H1 (cell line): ENCODE measurements at regions of chr21 and their contacts with region 1.

Region 1: DNA sequence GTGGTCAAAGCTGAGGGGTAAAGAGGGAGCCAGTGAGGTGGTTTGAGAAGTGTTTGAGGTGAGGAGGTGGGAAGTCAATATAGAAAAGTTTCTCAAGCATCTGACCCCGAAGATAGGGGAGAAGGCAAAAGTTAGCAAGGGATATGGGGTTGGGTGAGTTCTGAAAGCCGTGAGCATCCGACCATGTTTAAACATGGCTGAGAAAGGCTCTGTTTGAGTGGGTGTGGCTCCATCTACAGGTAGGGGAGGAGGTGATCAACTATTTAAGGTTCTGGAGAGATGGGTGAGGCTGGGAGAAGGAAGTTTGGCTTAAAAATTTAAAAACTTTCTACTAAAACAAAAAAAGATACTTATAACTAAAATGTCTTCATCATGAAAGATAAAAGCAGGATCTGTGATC is 273.8 kb downstream of the KCNJ6 start:
- DNase-seq: no peak
- H3K4me3 ChIP-seq: no peak overlapping the region
- H3K27ac ChIP-seq: peak overlapping the region; percentile 33; the same call in 1 of the 2 replicates
- H3K4me1 ChIP-seq: peaks cover 0 to 4% (median 1%) of the 10 kb centered on the region in 4 experiments; a peak in 1 of 7 replicates
- H3K27me3 ChIP-seq: no peaks in the 10 kb centered on the region
- CTCF ChIP-seq: peak; percentile 16 to 66 (median 65)
- EP300 ChIP-seq: no peak
- POLR2A ChIP-seq: no peak
- RAD21 ChIP-seq: peak; percentile 89 to 90

Region 2: DNA sequence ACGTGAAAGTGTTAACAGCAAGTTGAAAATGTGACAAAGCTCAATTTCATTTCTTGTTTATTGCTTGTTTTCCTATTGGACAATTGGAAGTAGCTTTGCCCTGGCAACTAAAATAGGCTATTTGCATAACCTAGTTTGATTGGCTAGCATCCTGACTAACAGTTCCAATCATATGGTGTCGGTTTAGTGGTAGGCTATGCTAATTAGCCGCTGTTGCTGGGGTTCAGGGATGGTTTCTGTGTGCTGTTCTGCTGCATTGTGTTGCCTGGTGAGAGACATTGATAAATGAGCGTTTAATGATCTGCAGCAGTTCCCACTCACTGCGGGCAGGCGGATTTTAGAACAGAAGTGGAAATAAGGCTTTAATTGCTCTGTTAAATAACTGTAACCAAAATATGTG is 207.4 kb before region 1 on chr21:
- CTCF ChIA-PET with region 1: no interaction called
- POLR2A ChIA-PET with region 1: no interaction called
- DNase-seq: peak in 1 of 2 experiments; percentile 21
- H3K4me3 ChIP-seq: peak overlapping the region in 1 of 4 experiments; percentile 32; a peak in 1 of 8 replicates
- H3K27ac ChIP-seq: no peak overlapping the region
- H3K4me1 ChIP-seq: peaks cover 3 to 14% (median 13%) of the 10 kb centered on the region in 4 experiments; a peak in 5 of 7 replicates
- H3K27me3 ChIP-seq: no peaks in the 10 kb centered on the region
- CTCF ChIP-seq: no peak
- EP300 ChIP-seq: no peak
- POLR2A ChIP-seq: no peak
- RAD21 ChIP-seq: no peak

Region 3: DNA sequence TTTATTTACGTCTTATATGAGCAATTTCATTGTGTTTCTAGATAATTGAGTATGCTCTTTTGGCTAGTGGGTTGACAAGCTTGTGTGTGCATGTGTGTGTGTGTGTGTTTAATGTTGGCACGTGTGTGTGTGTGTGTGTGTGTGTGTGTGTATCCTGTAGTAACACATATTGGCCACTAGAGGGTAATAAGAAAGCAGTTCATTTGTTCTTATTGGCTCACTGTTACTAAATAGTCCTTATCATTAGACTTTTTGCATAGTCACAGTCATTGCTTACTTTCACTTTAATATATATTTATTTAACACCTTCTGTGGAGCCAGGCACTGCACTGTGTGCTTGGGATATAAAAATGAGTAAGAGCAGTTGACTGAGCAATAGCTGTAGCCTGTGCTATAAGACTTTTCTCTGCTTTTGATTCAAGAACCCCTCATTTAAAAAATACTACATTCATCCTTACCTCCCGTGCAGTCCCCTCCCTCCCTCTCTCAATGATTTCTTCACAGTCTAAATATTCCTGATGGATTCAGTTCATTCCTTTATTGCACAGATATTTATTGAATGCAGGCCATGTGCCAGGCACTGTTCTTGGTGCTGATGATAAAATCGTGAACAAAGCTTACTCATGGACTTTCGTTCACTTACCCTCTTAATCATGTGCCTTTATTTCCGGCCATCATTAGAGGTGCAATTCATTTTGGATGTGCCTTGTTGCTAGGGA is 179.3 kb before region 1 on chr21:
- CTCF ChIA-PET with region 1: interaction called, 13 read pairs
- POLR2A ChIA-PET with region 1: no interaction called
- DNase-seq: no peak
- H3K4me3 ChIP-seq: no peak overlapping the region
- H3K27ac ChIP-seq: no peak overlapping the region; the same call in 1 of the 2 replicates
- H3K4me1 ChIP-seq: peaks cover 3 to 8% (median 7%) of the 10 kb centered on the region in 4 experiments; a peak in 5 of 7 replicates
- H3K27me3 ChIP-seq: no peaks in the 10 kb centered on the region
- CTCF ChIP-seq: peak in 2 of 3 experiments; percentile 40 to 71; a peak in 3 of 4 replicates
- EP300 ChIP-seq: no peak
- POLR2A ChIP-seq: no peak
- RAD21 ChIP-seq: peak; percentile 38 to 51

Region 4: DNA sequence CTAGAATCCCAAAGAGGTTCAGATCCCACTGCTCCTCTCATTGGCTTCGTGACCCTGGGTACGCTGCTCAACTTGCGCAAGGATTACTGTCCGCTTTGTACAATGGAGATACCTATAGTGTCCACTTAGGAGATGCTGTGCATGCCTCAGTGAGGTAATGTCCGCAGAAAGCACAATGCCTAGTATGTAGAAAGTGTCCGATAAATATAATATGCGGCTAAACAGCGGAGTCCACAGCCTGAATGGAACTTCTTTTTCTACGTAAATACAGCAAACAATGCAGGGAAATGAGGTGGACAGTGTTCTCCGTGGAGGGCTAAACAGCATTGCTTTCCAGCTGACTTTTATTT is 123.2 kb before region 1 on chr21:
- CTCF ChIA-PET with region 1: interaction called, 11 read pairs
- POLR2A ChIA-PET with region 1: no interaction called
- DNase-seq: no peak
- H3K4me3 ChIP-seq: no peak overlapping the region
- H3K27ac ChIP-seq: no peak overlapping the region
- H3K4me1 ChIP-seq: peaks cover 2 to 11% (median 6%) of the 10 kb centered on the region in 4 experiments; a peak in 6 of 7 replicates
- H3K27me3 ChIP-seq: no peaks in the 10 kb centered on the region
- CTCF ChIP-seq: no peak
- EP300 ChIP-seq: no peak
- POLR2A ChIP-seq: no peak
- RAD21 ChIP-seq: no peak

Region 5: DNA sequence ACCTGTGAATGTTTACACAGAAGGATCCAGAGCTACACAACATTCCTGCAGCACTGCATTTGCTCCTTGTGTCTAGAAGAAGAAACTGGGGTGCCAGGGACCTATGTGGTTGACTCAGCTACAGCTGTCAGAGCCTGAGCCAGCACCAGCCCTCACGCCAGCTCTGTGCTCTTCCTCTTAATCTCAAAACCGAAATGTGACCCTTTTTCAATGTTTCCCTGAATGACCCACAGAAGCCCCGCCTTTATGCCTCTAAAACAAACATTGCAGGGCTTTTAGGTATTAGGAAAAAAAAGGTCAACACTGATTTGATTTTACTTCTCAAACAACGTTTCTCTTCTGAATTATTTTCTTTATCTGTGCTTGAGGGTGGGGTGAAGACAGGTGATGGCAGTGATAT is 15.4 kb before region 1 on chr21:
- CTCF ChIA-PET with region 1: interaction called, 16 read pairs
- POLR2A ChIA-PET with region 1: interaction called, 5 read pairs
- DNase-seq: no peak
- H3K4me3 ChIP-seq: no peak overlapping the region
- H3K27ac ChIP-seq: no peak overlapping the region
- H3K4me1 ChIP-seq: peaks cover 3 to 14% (median 12%) of the 10 kb centered on the region in 4 experiments; a peak in 5 of 7 replicates
- H3K27me3 ChIP-seq: no peaks in the 10 kb centered on the region
- CTCF ChIP-seq: no peak
- EP300 ChIP-seq: no peak
- POLR2A ChIP-seq: no peak
- RAD21 ChIP-seq: no peak

Region 6: GRCh38 chr21:37658817-37659458 is 16.4 kb after region 1 on chr21:
- CTCF ChIA-PET with region 1: interaction called, 10 read pairs
- POLR2A ChIA-PET with region 1: interaction called, 6 read pairs
- DNase-seq: no peak
- H3K4me3 ChIP-seq: no peak overlapping the region
- H3K27ac ChIP-seq: no peak overlapping the region
- H3K4me1 ChIP-seq: no peaks in the 10 kb centered on the region
- H3K27me3 ChIP-seq: no peaks in the 10 kb centered on the region
- CTCF ChIP-seq: no peak
- EP300 ChIP-seq: no peak
- POLR2A ChIP-seq: no peak
- RAD21 ChIP-seq: peak in 1 of 2 experiments; percentile 15; a peak in 1 of 4 replicates

Region 7: DNA sequence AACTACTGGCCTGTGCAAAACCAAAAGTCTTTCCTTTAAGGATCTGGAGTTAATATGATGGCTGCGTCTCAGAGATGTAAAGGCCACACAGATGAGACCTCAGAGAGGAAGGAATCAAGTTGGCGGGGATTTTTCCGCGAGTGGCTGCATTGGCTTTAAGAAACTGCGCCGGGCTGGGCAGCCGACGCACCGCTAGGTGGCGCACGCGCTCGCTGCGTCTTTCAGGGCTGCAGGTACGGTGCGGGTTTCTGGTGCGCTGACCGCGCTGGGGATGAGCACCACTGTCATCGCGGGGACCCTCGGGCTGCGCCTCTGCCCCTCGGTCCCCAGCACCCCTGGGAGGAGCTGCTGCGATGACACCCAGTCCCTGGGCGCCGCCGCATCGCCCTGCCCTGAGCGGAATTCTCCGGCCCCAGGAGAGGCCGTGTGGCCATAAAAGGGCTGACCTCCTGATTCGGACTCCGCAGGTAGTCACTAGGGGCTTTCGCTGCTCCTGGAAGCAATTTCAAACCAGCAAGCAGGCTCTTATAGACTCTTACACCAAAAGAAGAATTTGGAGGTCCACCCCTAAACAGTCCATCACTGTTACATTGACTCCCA is 32.8 kb after region 1 on chr21:
- CTCF ChIA-PET with region 1: interaction called, 10 read pairs
- POLR2A ChIA-PET with region 1: interaction called, 3 read pairs
- DNase-seq: peak; percentile 29 to 96
- H3K4me3 ChIP-seq: peak overlapping the region in 2 of 4 experiments; percentile 7 to 48; a peak in 3 of 8 replicates
- H3K27ac ChIP-seq: no peak overlapping the region
- H3K4me1 ChIP-seq: peaks cover 0 to 8% (median 2%) of the 10 kb centered on the region in 4 experiments; a peak in 3 of 7 replicates
- H3K27me3 ChIP-seq: no peaks in the 10 kb centered on the region; a peak in 2 of 7 replicates
- CTCF ChIP-seq: peak; percentile 81 to 94 (median 89)
- EP300 ChIP-seq: no peak
- POLR2A ChIP-seq: no peak
- RAD21 ChIP-seq: peak; percentile 71 to 76